ENCODE measurements at regions of chr12 and their contacts with region 1.

Region 1: GRCh38 chr12:6792522-6793201 is 3.3 kb downstream of the CD4 start:
- DNase-seq: peak; percentile 86
- H3K4me3 Mint-ChIP-seq: peak overlapping the region; percentile 97
- H3K27ac Mint-ChIP-seq: peak overlapping the region; percentile 93
- H3K4me1 Mint-ChIP-seq: peaks cover 62% of the 10 kb centered on the region
- H3K27me3 Mint-ChIP-seq: no peaks in the 10 kb centered on the region

Region 2: GRCh38 chr12:6607751-6608591 is 184.7 kb before region 1 on chr12:
- intact Hi-C with region 1: loop called (anchors 5 kb)
- DNase-seq: peak; percentile 89
- H3K4me3 Mint-ChIP-seq: no peak overlapping the region
- H3K27ac Mint-ChIP-seq: no peak overlapping the region
- H3K4me1 Mint-ChIP-seq: peaks cover 45% of the 10 kb centered on the region
- H3K27me3 Mint-ChIP-seq: no peaks in the 10 kb centered on the region

Region 3: GRCh38 chr12:6723607-6724396 is 68.9 kb before region 1 on chr12 and contains the start of gene COPS7A:
- intact Hi-C with region 1: loop called (anchors 2 kb)
- DNase-seq: peak; percentile 99
- H3K4me3 Mint-ChIP-seq: peak within 1 kb of the TSS; percentile 89
- H3K27ac Mint-ChIP-seq: peak within 1 kb of the TSS; percentile 98
- H3K4me1 Mint-ChIP-seq: peaks cover 27% of the 10 kb centered on the region
- H3K27me3 Mint-ChIP-seq: peaks cover 3% of the 10 kb centered on the region
- total RNA-seq, gene COPS7A: 39.5 and 44.8 TPM in 2 replicates

Region 4: DNA sequence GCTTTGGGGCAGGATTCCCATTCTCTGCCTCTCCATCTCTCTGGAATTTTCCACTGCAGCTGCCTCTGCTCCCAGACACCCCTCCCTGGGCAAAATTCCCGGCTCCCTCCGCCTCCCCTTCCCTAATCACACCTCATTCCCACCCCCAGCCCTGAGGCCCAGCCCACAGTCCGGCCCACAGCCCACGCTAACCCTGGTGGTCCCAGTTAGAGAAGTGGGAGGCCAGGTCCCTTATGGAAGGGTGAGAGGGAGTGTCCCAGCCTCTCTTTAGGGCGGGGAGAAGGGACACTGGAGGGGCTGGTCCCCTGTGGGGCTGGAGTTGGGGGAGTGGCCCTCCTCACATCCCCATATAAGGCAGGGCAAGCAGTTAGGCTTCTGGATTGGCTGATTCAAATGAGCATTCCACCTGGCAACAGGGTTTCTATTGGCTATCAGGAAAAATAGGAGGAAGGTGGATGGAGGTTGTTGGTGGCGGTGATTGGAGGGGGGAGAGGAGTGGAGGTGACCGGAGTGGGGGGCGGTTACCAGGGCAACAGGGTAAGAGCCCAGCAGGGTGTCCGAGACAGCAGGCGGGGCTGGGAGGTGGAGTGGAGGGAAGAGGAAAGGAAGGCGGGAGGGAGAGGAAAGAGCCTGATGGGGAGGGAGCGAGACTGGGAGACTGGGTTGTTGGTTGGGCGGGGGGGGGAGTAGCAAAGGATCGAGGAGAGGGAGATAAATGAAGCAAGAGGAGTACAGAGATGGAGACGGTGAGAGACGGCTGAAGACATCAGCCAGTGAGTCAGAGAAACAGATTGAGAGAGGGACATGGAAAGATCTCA is 28.4 kb before region 1 on chr12:
- intact Hi-C with region 1: loop called (anchors 1 kb)
- DNase-seq: peak; percentile 91
- H3K4me3 Mint-ChIP-seq: peak overlapping the region; percentile 75
- H3K27ac Mint-ChIP-seq: peak overlapping the region; percentile 70
- H3K4me1 Mint-ChIP-seq: peaks cover 36% of the 10 kb centered on the region
- H3K27me3 Mint-ChIP-seq: peaks cover 7% of the 10 kb centered on the region

Region 5: DNA sequence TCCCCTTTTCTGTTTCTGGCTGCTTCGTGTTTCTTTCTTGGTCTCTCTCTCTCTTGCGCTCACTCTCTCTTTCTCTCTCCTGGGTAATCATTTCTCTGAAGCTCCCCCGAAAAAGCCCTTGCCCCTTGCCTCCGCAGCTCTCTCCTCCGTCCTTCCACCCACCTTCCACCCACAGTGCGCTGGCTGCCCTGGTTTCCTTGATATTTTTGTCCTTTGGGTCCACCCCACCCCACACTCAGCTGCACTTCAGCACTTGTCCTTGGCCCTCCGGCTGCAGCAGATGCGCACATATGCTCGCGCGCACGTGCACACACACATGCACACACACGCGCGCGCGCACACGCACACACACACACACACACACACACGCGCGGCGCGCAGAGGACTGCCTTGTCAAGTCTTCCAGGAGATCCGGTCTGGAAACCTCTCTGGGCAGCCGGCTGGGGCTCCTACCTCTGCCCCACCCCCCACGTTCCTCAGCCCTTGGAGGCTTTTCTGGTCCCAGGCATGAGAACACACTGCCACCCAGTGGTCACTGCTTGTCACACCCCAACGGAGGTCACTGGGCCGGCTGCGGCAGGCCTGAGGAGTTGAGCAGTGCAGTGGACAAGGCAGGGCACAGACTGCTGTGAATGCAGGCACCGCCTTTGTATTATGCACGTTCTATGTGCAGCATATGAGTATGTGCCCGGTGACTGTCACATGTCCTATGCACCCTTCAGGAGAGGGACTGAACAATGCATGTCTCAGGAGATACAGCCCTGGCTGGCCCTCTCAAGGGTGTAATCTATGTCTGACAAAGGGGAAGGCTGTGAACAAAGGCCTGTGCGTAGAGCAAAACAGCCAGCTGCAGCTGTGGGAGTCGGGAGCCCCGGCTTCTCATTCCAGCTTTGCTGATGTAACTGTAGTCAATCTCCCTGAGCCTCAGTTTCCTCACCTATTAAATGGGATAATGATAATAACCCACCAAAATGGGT is 13.8 kb before region 1 on chr12:
- intact Hi-C with region 1: loop called (anchors 1 kb)
- DNase-seq: peak; percentile 97
- H3K4me3 Mint-ChIP-seq: peak overlapping the region; percentile 84
- H3K27ac Mint-ChIP-seq: peak overlapping the region; percentile 88
- H3K4me1 Mint-ChIP-seq: peaks cover 76% of the 10 kb centered on the region
- H3K27me3 Mint-ChIP-seq: no peaks in the 10 kb centered on the region

Region 6: GRCh38 chr12:6996040-6996441 is 203.4 kb after region 1 on chr12:
- intact Hi-C with region 1: no loop called
- DNase-seq: no peak
- H3K4me3 Mint-ChIP-seq: no peak overlapping the region
- H3K27ac Mint-ChIP-seq: no peak overlapping the region
- H3K4me1 Mint-ChIP-seq: no peaks in the 10 kb centered on the region
- H3K27me3 Mint-ChIP-seq: no peaks in the 10 kb centered on the region